ENCODE measurements at regions of chr15 and their contacts with region 1.

Region 1: DNA sequence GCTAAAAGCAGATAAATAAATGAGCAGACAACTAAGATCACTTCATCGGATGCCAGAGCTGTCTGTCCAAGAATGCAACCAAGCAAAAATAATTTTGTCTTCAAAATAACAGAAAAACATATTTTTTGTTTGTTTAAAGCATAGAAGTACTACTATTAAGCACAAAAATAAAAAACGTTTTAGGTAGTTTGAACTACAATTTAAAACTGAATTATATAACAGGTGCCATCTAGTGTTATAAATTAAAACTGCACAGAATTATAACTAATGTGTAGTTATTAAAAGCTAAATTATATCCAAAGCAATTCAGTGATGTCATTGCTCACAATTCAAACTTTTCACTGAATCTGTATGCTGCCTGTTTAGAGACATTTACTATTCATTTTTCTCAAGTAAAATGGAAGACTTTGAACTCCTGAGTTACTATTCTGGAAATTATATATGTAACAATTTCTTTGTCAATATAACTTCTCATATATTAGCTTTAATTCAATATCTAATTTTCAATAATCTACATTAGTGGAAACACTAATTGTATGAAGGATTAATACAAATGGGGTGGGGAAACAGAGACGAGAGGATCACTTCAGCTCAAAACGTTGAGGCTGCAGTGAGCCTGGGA is 29.5 kb downstream of the LINS1 start:
- DNase-seq: peak in 2 of 9 experiments; percentile 26 to 51
- ATAC-seq: peak; percentile 58
- H3K4me3 ChIP-seq: no peak overlapping the region
- H3K4me3 Mint-ChIP-seq: peak overlapping the region; percentile 64
- H3K27ac ChIP-seq: peak overlapping the region in 1 of 2 experiments; percentile 6
- H3K27ac Mint-ChIP-seq: peak overlapping the region; percentile 93
- H3K4me1 ChIP-seq: peaks cover 26% of the 10 kb centered on the region
- H3K4me1 Mint-ChIP-seq: peaks cover 56% of the 10 kb centered on the region
- H3K27me3 ChIP-seq: no peaks in the 10 kb centered on the region
- H3K27me3 Mint-ChIP-seq: no peaks in the 10 kb centered on the region
- CTCF ChIP-seq: peak; percentile 80

Region 2: DNA sequence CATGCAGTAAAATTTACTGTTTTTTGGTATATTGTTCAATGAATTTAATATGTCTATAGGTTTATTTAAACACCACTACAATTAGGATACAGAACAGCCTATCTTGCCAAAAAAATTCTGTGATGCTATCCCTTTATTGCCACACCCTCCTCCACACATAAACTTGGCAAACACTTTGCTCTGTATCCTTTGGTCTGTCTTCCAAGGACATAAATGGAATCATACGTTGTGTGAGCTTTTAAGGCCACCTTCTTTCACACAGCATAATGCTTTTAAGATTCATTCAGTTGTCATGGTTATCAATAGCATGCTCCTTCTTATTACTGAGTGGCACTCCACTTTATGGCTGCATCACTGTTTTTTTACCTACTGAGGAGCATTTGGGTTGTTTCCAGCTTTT is 115.3 kb before region 1 on chr15:
- CTCF ChIA-PET with region 1: no interaction called
- POLR2A ChIA-PET with region 1: no interaction called
- intact Hi-C with region 1: no loop called
- DNase-seq: no peak
- ATAC-seq: no peak
- H3K4me3 ChIP-seq: no peak overlapping the region
- H3K4me3 Mint-ChIP-seq: no peak overlapping the region
- H3K27ac ChIP-seq: no peak overlapping the region
- H3K27ac Mint-ChIP-seq: no peak overlapping the region
- H3K4me1 ChIP-seq: no peaks in the 10 kb centered on the region
- H3K4me1 Mint-ChIP-seq: no peaks in the 10 kb centered on the region
- H3K27me3 ChIP-seq: no peaks in the 10 kb centered on the region
- H3K27me3 Mint-ChIP-seq: no peaks in the 10 kb centered on the region
- CTCF ChIP-seq: no peak

Region 3: GRCh38 chr15:100596792-100597191 is 24.3 kb after region 1 on chr15:
- CTCF ChIA-PET with region 1: interaction called, 13 read pairs
- POLR2A ChIA-PET with region 1: interaction called, 4 read pairs
- intact Hi-C with region 1: no loop called
- DNase-seq: peak; percentile 49 to 95 (median 84)
- ATAC-seq: peak; percentile 86
- H3K4me3 ChIP-seq: peak overlapping the region; percentile 41 to 47
- H3K4me3 Mint-ChIP-seq: peak overlapping the region; percentile 85
- H3K27ac ChIP-seq: peak overlapping the region; percentile 70 to 85
- H3K27ac Mint-ChIP-seq: peak overlapping the region; percentile 97
- H3K4me1 ChIP-seq: peaks cover 88% of the 10 kb centered on the region
- H3K4me1 Mint-ChIP-seq: peaks cover 77% of the 10 kb centered on the region
- H3K27me3 ChIP-seq: no peaks in the 10 kb centered on the region
- H3K27me3 Mint-ChIP-seq: no peaks in the 10 kb centered on the region
- CTCF ChIP-seq: no peak

Region 4: DNA sequence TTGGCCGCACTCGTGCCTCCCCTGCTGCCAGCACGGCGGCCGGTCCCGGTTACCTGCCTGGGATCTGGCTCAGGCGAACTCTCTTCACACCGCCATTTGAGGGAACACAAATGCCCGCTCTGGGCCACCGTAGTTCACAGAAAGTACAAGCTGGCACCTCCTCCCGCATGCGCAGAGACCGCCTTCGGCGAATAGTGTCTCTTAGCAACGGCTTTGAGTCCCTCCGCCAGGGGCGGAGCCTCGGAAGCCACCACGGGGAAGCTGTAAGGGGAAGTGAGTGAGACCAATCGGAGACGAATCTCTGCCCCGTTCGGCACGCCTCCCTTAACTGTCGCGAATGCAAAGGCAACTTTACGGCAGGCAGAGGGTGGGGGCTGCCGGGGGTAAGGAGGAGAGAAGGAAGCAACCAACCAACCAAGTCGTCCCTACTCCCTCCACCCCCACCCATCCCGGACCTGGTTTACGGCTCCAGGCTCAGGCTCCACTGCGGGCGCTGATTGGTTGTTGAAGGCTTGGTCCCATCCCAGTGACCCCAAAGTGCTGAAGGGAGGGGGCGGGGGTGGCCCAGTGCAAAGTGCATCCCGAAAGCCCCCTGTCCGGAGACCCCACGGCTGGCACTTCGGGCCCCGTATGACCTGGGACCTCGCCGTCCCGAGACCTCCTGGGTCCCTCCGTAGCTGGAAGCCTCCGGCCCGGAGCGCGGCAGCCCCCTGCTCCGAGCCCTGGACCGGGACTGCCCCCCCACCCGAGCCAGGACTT is 29.8 kb after region 1 on chr15 and contains the starts of genes ASB7 and LINS1:
- CTCF ChIA-PET with region 1: interaction called, 13 read pairs
- POLR2A ChIA-PET with region 1: interaction called, 4 read pairs
- intact Hi-C with region 1: loop called in 1 of 2 experiments (anchors 2 kb)
- DNase-seq: peak; percentile 99 to 100 (median 100)
- ATAC-seq: peak; percentile 89
- H3K4me3 ChIP-seq: peak within 1 kb of the TSS; percentile 90 to 95
- H3K4me3 Mint-ChIP-seq: no peak within 1 kb of the TSS
- H3K27ac ChIP-seq: peak within 1 kb of the TSS; percentile 71 to 94
- H3K27ac Mint-ChIP-seq: peak within 1 kb of the TSS; percentile 93
- H3K4me1 ChIP-seq: peaks cover 58% of the 10 kb centered on the region
- H3K4me1 Mint-ChIP-seq: peaks cover 64% of the 10 kb centered on the region
- H3K27me3 ChIP-seq: no peaks in the 10 kb centered on the region
- H3K27me3 Mint-ChIP-seq: no peaks in the 10 kb centered on the region
- CTCF ChIP-seq: no peak
- total RNA-seq, gene ASB7: 17.2 to 19.9 TPM
- total RNA-seq, gene LINS1: 42.8 to 45.9 TPM

Region 5: DNA sequence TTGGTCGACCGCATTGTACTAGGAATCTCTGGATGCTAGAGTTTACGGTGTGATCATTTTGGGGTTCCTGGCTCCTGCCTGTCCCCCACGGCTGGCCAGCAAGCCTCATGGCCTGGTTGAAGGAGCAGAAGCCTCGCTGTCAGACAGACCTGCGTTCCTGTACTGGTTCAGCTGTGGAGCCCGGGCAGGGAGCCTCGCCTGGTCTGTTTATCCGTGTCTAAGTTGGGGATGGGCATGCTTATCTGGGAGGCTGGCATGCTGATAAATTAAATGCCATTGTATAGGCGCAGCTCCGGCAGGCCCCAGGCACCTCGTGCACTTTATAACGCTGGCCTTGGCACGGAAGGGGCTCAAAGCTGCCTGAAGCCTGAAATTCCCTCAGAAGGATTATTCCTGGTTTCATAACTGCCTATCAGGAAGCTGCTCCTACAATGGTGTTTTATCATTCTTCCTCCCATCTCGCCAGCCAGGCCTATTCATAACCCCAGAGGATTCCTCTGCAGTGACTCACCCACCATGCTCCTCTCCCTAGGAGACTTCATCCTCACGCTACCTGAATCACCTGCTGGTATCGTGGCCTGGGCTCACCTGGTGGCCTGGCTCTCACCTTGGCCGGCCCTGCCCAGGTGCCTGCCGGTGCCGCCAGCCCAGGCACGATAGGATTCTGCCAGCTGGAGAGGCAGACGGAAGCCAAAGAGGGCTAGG is 140.8 kb after region 1 on chr15:
- CTCF ChIA-PET with region 1: no interaction called
- POLR2A ChIA-PET with region 1: no interaction called
- intact Hi-C with region 1: no loop called
- DNase-seq: no peak
- ATAC-seq: no peak
- H3K4me3 ChIP-seq: no peak overlapping the region
- H3K4me3 Mint-ChIP-seq: no peak overlapping the region
- H3K27ac ChIP-seq: no peak overlapping the region
- H3K27ac Mint-ChIP-seq: no peak overlapping the region
- H3K4me1 ChIP-seq: no peaks in the 10 kb centered on the region
- H3K4me1 Mint-ChIP-seq: no peaks in the 10 kb centered on the region
- H3K27me3 ChIP-seq: no peaks in the 10 kb centered on the region
- H3K27me3 Mint-ChIP-seq: peaks cover 4% of the 10 kb centered on the region
- CTCF ChIP-seq: no peak

Measured in CD8-positive, alpha-beta T cell (primary cell).